PC-3 (cell line): ENCODE measurements at regions of chr2 and their contacts with region 1.

Region 1: DNA sequence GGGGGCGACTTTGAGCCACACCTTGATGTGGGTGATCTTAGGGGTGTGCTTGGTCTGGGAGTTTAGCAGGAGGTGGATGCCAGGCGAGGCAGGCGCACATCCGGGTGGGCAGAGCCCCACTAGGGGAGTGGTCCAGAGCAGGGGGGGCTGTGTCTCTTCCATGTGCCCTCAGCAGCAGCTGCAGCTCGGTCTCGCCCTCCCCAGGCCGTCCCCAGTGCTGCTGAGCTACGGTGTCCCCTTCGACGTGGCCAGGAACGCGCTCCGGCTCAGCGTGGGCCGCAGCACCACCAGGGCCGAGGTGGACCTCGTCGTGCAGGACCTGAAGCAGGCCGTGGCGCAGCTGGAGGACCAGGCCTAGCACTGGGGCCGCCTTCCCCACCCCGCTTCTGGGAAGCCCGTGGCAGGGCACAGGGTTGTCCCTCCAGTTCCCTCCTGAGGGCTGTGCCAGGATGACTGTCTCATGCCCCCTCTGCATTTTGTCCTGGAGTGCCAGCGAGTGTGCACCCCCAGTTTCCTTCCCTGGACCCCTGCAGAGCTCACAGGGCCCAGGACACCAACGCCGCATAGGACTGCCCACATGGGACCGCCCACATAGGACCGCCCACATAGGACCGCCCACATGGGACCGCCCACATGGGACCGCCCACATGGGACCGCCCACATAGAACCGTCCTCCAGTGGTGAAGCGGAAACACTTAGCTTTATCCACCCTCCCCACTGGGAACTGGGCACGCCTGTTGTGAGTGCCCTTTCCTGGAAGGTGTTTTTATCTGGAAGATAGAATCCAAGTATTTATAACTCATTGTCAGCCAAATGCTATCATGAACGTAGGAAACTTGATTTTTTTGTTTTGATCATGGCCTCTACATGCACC is 1.9 kb upstream of the ESPNL start:
- DNase-seq: peak; percentile 68
- ATAC-seq: peak; percentile 91
- H3K4me3 ChIP-seq: no peak overlapping the region
- H3K27ac ChIP-seq: peak overlapping the region; percentile 60
- H3K4me1 ChIP-seq: peaks cover 11% of the 10 kb centered on the region
- H3K27me3 ChIP-seq: no peaks in the 10 kb centered on the region
- CTCF ChIP-seq: no peak

Region 2: DNA sequence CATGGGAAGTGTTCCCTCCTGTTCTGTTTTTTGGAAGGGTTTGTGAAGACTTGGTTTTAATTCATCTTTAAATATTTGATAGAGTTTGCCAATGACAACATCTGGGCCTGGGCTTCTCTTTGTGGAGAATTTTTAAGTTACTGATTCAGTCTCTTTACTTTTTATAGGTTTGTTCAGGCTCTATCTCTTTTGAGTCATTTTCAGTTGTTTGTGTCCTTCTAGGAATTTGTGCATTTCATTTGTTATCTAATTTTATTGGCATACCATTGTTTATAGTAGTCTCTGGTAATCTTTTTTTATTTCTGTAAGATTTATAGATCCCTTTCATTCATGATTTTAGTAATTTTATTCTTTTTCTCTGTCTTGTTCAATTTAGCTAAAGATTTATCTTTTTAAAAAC is 22.8 kb before region 1 on chr2:
- CTCF ChIA-PET with region 1: no interaction called
- POLR2A ChIA-PET with region 1: no interaction called
- intact Hi-C with region 1: loop called (anchors 1 kb)
- DNase-seq: peak; percentile 27
- ATAC-seq: peak; percentile 76
- H3K4me3 ChIP-seq: no peak overlapping the region
- H3K27ac ChIP-seq: no peak overlapping the region
- H3K4me1 ChIP-seq: peaks cover 23% of the 10 kb centered on the region; the same call in 1 of the 2 replicates
- H3K27me3 ChIP-seq: no peaks in the 10 kb centered on the region
- CTCF ChIP-seq: no peak